CD8-positive, alpha-beta T cell (primary cell): ENCODE measurements at regions of chr9 and their contacts with region 1.

Region 1: DNA sequence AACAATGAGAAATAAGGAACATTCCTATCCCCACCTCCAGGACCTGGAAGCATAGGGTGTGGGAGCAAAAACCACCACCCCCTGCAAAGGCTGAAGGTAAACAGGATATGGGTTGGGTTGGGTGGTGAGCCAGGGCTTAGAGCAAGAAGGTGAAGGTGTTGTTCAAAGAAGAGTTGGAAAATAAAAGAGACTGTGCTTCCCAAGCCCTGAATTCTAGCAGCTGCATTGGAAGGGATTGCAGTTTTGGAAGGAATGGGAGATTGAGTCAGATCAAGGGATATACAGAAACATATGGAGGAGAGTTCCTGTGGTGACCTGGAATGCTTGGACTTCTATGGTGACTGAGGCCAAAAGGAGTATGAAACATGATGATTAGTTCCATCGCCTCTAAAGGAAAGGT is 24.7 kb upstream of the MTAP start:
- DNase-seq: peak in 3 of 9 experiments; percentile 10 to 59 (median 22)
- ATAC-seq: no peak
- H3K4me3 ChIP-seq: no peak overlapping the region
- H3K4me3 Mint-ChIP-seq: no peak overlapping the region
- H3K27ac ChIP-seq: no peak overlapping the region
- H3K27ac Mint-ChIP-seq: no peak overlapping the region
- H3K4me1 ChIP-seq: peaks cover 30% of the 10 kb centered on the region
- H3K4me1 Mint-ChIP-seq: peaks cover 2% of the 10 kb centered on the region
- H3K27me3 ChIP-seq: no peaks in the 10 kb centered on the region
- H3K27me3 Mint-ChIP-seq: no peaks in the 10 kb centered on the region
- CTCF ChIP-seq: no peak

Region 2: DNA sequence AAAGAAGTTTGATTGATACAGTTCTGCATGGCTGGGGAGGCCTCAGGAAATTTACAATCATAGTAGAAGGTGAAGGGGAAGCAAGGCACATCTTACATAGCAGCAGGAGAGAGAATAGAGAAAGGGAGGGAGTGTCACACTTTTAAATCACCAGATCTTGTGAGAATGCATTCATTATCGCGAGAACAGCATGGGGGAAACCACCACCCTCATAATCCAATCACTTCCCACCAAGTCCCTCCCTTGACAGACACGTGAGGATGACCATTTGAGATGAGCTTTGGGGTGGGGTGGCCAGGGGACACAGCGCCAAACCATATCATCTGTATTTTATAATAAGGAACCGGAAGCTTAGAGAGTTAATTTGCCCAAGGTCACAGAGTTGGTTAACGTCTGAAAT is 1107.3 kb before region 1 on chr9:
- CTCF ChIA-PET with region 1: no interaction called
- POLR2A ChIA-PET with region 1: no interaction called
- intact Hi-C with region 1: no loop called
- DNase-seq: no peak
- ATAC-seq: no peak
- H3K4me3 ChIP-seq: no peak overlapping the region
- H3K4me3 Mint-ChIP-seq: no peak overlapping the region
- H3K27ac ChIP-seq: no peak overlapping the region
- H3K27ac Mint-ChIP-seq: no peak overlapping the region
- H3K4me1 ChIP-seq: no peaks in the 10 kb centered on the region
- H3K4me1 Mint-ChIP-seq: no peaks in the 10 kb centered on the region
- H3K27me3 ChIP-seq: no peaks in the 10 kb centered on the region
- H3K27me3 Mint-ChIP-seq: no peaks in the 10 kb centered on the region
- CTCF ChIP-seq: no peak

Region 3: GRCh38 chr9:21239911-21240310 is 537.8 kb before region 1 on chr9 and contains the start of gene IFNA14:
- CTCF ChIA-PET with region 1: interaction called, 3 read pairs
- POLR2A ChIA-PET with region 1: no interaction called
- intact Hi-C with region 1: loop called in 1 of 2 experiments (anchors 2 kb)
- DNase-seq: no peak
- ATAC-seq: no peak
- H3K4me3 ChIP-seq: no peak within 1 kb of the TSS
- H3K4me3 Mint-ChIP-seq: no peak within 1 kb of the TSS
- H3K27ac ChIP-seq: no peak within 1 kb of the TSS
- H3K27ac Mint-ChIP-seq: no peak within 1 kb of the TSS
- H3K4me1 ChIP-seq: no peaks in the 10 kb centered on the region
- H3K4me1 Mint-ChIP-seq: peaks cover 9% of the 10 kb centered on the region
- H3K27me3 ChIP-seq: no peaks in the 10 kb centered on the region
- H3K27me3 Mint-ChIP-seq: peaks cover 16% of the 10 kb centered on the region
- CTCF ChIP-seq: no peak
- total RNA-seq, gene IFNA14: not detected

Region 4: DNA sequence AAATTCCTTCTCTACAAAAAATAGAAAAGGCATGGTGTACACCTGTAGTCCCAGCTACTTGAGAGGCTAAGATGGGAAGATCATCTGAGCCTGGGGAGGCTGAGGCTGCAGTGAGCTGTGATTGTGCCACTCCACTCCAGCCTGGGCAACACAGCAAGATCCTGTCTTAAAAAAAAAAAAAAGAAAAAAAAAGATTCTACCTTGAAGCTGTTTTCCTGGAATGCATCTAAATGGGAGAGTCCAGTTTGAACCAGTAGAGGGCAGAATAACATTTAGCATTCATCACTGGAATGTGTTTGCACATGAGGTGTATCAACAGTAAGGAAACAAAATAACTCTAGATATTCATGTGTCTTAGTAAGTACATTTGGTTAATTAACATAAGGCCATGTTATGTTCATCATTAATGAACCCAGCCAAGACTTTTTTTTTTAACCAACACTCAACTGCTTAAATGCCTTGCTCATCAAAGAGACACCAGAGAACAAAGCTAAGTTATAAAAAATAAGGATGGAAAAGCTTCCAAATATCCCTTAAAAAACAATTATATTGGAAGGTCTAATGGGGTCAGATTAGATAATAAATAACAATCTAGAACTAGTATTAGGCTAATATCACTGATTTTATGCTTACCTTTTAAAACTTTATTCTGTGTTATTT is 311.7 kb before region 1 on chr9:
- CTCF ChIA-PET with region 1: interaction called, 14 read pairs
- POLR2A ChIA-PET with region 1: no interaction called
- intact Hi-C with region 1: no loop called
- DNase-seq: peak in 2 of 9 experiments; percentile 68 to 75
- ATAC-seq: peak; percentile 77
- H3K4me3 ChIP-seq: no peak overlapping the region
- H3K4me3 Mint-ChIP-seq: no peak overlapping the region
- H3K27ac ChIP-seq: no peak overlapping the region
- H3K27ac Mint-ChIP-seq: no peak overlapping the region
- H3K4me1 ChIP-seq: no peaks in the 10 kb centered on the region
- H3K4me1 Mint-ChIP-seq: peaks cover 2% of the 10 kb centered on the region
- H3K27me3 ChIP-seq: no peaks in the 10 kb centered on the region
- H3K27me3 Mint-ChIP-seq: no peaks in the 10 kb centered on the region
- CTCF ChIP-seq: peak; percentile 71

Region 5: GRCh38 chr9:21576331-21577189 is 201.1 kb before region 1 on chr9:
- CTCF ChIA-PET with region 1: no interaction called
- POLR2A ChIA-PET with region 1: no interaction called
- intact Hi-C with region 1: loop called in 1 of 2 experiments (anchors 5 kb)
- DNase-seq: peak in 5 of 9 experiments; percentile 26 to 78 (median 63)
- ATAC-seq: peak; percentile 70
- H3K4me3 ChIP-seq: no peak overlapping the region
- H3K4me3 Mint-ChIP-seq: peak overlapping the region; percentile 68
- H3K27ac ChIP-seq: peak overlapping the region in 1 of 2 experiments; percentile 22
- H3K27ac Mint-ChIP-seq: peak overlapping the region; percentile 93
- H3K4me1 ChIP-seq: peaks cover 40% of the 10 kb centered on the region
- H3K4me1 Mint-ChIP-seq: peaks cover 43% of the 10 kb centered on the region
- H3K27me3 ChIP-seq: peaks cover 0 to 2% of the 10 kb centered on the region in 2 experiments
- H3K27me3 Mint-ChIP-seq: no peaks in the 10 kb centered on the region
- CTCF ChIP-seq: no peak

Region 6: GRCh38 chr9:21741151-21741550 is 36.5 kb before region 1 on chr9:
- CTCF ChIA-PET with region 1: no interaction called
- POLR2A ChIA-PET with region 1: no interaction called
- intact Hi-C with region 1: loop called in 1 of 2 experiments (anchors 5 kb)
- DNase-seq: no peak
- ATAC-seq: no peak
- H3K4me3 ChIP-seq: no peak overlapping the region
- H3K4me3 Mint-ChIP-seq: no peak overlapping the region
- H3K27ac ChIP-seq: no peak overlapping the region
- H3K27ac Mint-ChIP-seq: no peak overlapping the region
- H3K4me1 ChIP-seq: no peaks in the 10 kb centered on the region
- H3K4me1 Mint-ChIP-seq: no peaks in the 10 kb centered on the region
- H3K27me3 ChIP-seq: peaks cover 0 to 2% of the 10 kb centered on the region in 2 experiments
- H3K27me3 Mint-ChIP-seq: peaks cover 9% of the 10 kb centered on the region
- CTCF ChIP-seq: no peak

Region 7: GRCh38 chr9:21751998-21752397 is 25.7 kb before region 1 on chr9:
- CTCF ChIA-PET with region 1: no interaction called
- POLR2A ChIA-PET with region 1: no interaction called
- intact Hi-C with region 1: no loop called
- DNase-seq: no peak
- ATAC-seq: no peak
- H3K4me3 ChIP-seq: no peak overlapping the region
- H3K4me3 Mint-ChIP-seq: no peak overlapping the region
- H3K27ac ChIP-seq: no peak overlapping the region
- H3K27ac Mint-ChIP-seq: no peak overlapping the region
- H3K4me1 ChIP-seq: no peaks in the 10 kb centered on the region
- H3K4me1 Mint-ChIP-seq: no peaks in the 10 kb centered on the region
- H3K27me3 ChIP-seq: no peaks in the 10 kb centered on the region
- H3K27me3 Mint-ChIP-seq: peaks cover 5% of the 10 kb centered on the region
- CTCF ChIP-seq: no peak

Region 8: DNA sequence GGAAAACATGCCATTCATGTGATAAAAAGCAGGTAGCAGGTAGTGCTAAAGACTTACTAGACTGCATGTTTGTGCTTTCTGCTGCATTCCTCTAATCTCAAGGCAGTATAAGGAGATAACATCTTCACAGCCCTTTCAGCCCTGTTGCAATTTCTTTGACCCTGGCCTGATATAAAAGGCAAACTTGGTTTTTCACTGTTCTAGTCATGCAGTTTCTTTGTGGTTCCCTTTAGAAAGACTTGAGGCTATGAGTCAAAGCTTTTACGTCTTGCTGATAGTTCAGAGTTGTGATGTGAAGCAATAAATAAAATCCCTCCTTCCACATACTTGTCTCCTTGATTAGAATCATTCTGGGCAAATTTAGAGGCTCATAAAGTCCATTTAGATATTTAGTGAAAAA is 320.0 kb after region 1 on chr9:
- CTCF ChIA-PET with region 1: no interaction called
- POLR2A ChIA-PET with region 1: no interaction called
- intact Hi-C with region 1: no loop called
- DNase-seq: no peak
- ATAC-seq: no peak
- H3K4me3 ChIP-seq: no peak overlapping the region
- H3K4me3 Mint-ChIP-seq: no peak overlapping the region
- H3K27ac ChIP-seq: no peak overlapping the region
- H3K27ac Mint-ChIP-seq: no peak overlapping the region
- H3K4me1 ChIP-seq: no peaks in the 10 kb centered on the region
- H3K4me1 Mint-ChIP-seq: no peaks in the 10 kb centered on the region
- H3K27me3 ChIP-seq: no peaks in the 10 kb centered on the region
- H3K27me3 Mint-ChIP-seq: peaks cover 13% of the 10 kb centered on the region
- CTCF ChIP-seq: no peak